ENCODE measurements at regions of chr6 and their contacts with region 1.

Region 1: GRCh38 chr6:118893807-118894424 is at the start of gene ASF1A:
- DNase-seq: peak; percentile 83 to 91 (median 85)
- H3K4me3 ChIP-seq: peak within 1 kb of the TSS; percentile 84 to 99 (median 96)
- H3K4me3 Mint-ChIP-seq: peak within 1 kb of the TSS; percentile 97
- H3K27ac ChIP-seq: peak within 1 kb of the TSS; percentile 88 to 91
- H3K27ac Mint-ChIP-seq: peak within 1 kb of the TSS; percentile 87 to 97 (median 95)
- H3K4me1 ChIP-seq: peaks cover 30 to 44% of the 10 kb centered on the region in 2 donors
- H3K4me1 Mint-ChIP-seq: peaks cover 36% of the 10 kb centered on the region
- H3K27me3 ChIP-seq: no peaks in the 10 kb centered on the region
- H3K27me3 Mint-ChIP-seq: peaks cover 0 to 3% (median 0%) of the 10 kb centered on the region in 3 donors
- CTCF ChIP-seq: peak; percentile 43
- polyA plus RNA-seq, gene ASF1A: 3.1 to 14.4 (median 10.5) TPM

Region 2: GRCh38 chr6:118651282-118652050 is 242.4 kb before region 1 on chr6 and contains the start of gene CEP85L:
- intact Hi-C with region 1: loop called in 1 of 2 experiments (anchors 5 kb)
- DNase-seq: peak; percentile 74 to 85 (median 79)
- H3K4me3 ChIP-seq: peak within 1 kb of the TSS; percentile 79 to 93 (median 85)
- H3K4me3 Mint-ChIP-seq: peak within 1 kb of the TSS; percentile 91 to 94
- H3K27ac ChIP-seq: peak within 1 kb of the TSS; percentile 66 to 87
- H3K27ac Mint-ChIP-seq: peak within 1 kb of the TSS; percentile 77 to 95 (median 92)
- H3K4me1 ChIP-seq: peaks cover 18 to 32% of the 10 kb centered on the region in 2 donors
- H3K4me1 Mint-ChIP-seq: peaks cover 25% of the 10 kb centered on the region
- H3K27me3 ChIP-seq: no peaks in the 10 kb centered on the region
- H3K27me3 Mint-ChIP-seq: peaks cover 2 to 3% (median 3%) of the 10 kb centered on the region in 3 donors
- CTCF ChIP-seq: peak; percentile 30
- polyA plus RNA-seq, gene CEP85L: 14.9 to 38.3 (median 19.6) TPM

Region 3: GRCh38 chr6:118800394-118801071 is 93.4 kb before region 1 on chr6:
- intact Hi-C with region 1: loop called in 1 of 2 experiments (anchors 10 kb)
- DNase-seq: peak; percentile 65 to 76 (median 72)
- H3K4me3 ChIP-seq: no peak overlapping the region
- H3K4me3 Mint-ChIP-seq: peak overlapping the region in 1 of 2 donors; percentile 35
- H3K27ac ChIP-seq: no peak overlapping the region
- H3K27ac Mint-ChIP-seq: no peak overlapping the region
- H3K4me1 ChIP-seq: peaks cover 3 to 8% of the 10 kb centered on the region in 2 donors
- H3K4me1 Mint-ChIP-seq: peaks cover 10% of the 10 kb centered on the region
- H3K27me3 ChIP-seq: no peaks in the 10 kb centered on the region
- H3K27me3 Mint-ChIP-seq: peaks cover 0 to 2% (median 1%) of the 10 kb centered on the region in 3 donors
- CTCF ChIP-seq: peak; percentile 94

Region 4: GRCh38 chr6:118934461-118935330 is 40.8 kb after region 1 on chr6 and contains the start of gene MCM9:
- intact Hi-C with region 1: loop called (anchors 2 to 5 kb)
- DNase-seq: peak; percentile 88 to 92 (median 90)
- H3K4me3 ChIP-seq: peak within 1 kb of the TSS; percentile 96 to 97 (median 97)
- H3K4me3 Mint-ChIP-seq: peak within 1 kb of the TSS; percentile 88 to 95
- H3K27ac ChIP-seq: peak within 1 kb of the TSS; percentile 93 to 97
- H3K27ac Mint-ChIP-seq: peak within 1 kb of the TSS; percentile 89 to 95 (median 93)
- H3K4me1 ChIP-seq: peaks cover 5 to 24% of the 10 kb centered on the region in 2 donors
- H3K4me1 Mint-ChIP-seq: peaks cover 29% of the 10 kb centered on the region
- H3K27me3 ChIP-seq: no peaks in the 10 kb centered on the region
- H3K27me3 Mint-ChIP-seq: peaks cover 0 to 2% (median 0%) of the 10 kb centered on the region in 3 donors
- CTCF ChIP-seq: no peak
- polyA plus RNA-seq, gene MCM9: 9.4 to 11.9 (median 9.8) TPM

Region 5: DNA sequence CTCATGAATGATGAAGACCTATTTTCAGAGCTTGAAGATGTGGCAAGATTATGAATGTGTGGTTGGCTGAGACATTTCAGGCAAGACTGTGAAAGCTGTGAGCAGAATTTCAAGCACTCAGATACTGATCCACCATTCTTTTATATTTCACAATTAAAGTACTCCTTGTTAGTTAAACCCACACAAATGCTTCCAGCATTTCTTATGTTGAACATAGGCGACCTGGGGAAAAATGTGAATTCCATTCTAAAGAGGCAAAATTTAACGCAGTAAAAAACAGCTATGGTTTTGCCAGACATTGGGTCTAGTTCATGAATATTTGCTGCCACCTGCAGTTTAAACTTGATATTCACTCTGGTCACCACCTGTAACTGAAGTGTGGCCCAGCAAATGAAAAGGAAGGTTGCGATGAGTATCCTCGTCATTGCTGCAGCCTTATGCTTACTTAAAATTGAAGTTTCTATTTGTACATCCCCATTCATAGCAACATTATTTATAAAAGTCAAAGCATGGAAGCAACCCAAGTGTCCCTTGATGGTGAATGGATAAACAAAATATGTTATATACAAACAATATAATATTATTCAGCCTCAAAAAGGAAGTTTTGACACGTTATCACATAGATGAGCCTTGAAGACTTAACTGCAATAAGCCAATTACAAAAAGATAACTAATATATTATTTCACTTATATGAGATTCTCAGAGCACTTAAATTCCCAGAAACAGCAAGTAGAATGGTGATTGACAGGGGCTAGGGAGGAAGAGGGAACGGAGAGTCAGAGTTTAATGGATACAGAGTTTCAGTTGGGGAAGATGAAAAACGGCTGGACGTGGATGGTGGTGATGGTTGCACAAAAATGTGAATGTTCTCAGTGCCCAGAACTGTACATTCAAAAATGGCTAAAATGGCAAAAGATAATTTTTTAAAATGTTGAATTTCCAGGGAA is 217.0 kb after region 1 on chr6:
- intact Hi-C with region 1: loop called in 1 of 2 experiments (anchors 10 kb)
- DNase-seq: peak; percentile 25 to 45 (median 43)
- H3K4me3 ChIP-seq: no peak overlapping the region
- H3K4me3 Mint-ChIP-seq: no peak overlapping the region
- H3K27ac ChIP-seq: no peak overlapping the region
- H3K27ac Mint-ChIP-seq: no peak overlapping the region
- H3K4me1 ChIP-seq: peaks cover 13 to 16% of the 10 kb centered on the region in 2 donors
- H3K4me1 Mint-ChIP-seq: peaks cover 15% of the 10 kb centered on the region
- H3K27me3 ChIP-seq: no peaks in the 10 kb centered on the region
- H3K27me3 Mint-ChIP-seq: peaks cover 2% of the 10 kb centered on the region in 3 donors
- CTCF ChIP-seq: peak; percentile 67

Measured in CD14-positive monocyte (primary cell).